ENCODE measurements at regions of chr1 and their contacts with region 1.

Region 1: DNA sequence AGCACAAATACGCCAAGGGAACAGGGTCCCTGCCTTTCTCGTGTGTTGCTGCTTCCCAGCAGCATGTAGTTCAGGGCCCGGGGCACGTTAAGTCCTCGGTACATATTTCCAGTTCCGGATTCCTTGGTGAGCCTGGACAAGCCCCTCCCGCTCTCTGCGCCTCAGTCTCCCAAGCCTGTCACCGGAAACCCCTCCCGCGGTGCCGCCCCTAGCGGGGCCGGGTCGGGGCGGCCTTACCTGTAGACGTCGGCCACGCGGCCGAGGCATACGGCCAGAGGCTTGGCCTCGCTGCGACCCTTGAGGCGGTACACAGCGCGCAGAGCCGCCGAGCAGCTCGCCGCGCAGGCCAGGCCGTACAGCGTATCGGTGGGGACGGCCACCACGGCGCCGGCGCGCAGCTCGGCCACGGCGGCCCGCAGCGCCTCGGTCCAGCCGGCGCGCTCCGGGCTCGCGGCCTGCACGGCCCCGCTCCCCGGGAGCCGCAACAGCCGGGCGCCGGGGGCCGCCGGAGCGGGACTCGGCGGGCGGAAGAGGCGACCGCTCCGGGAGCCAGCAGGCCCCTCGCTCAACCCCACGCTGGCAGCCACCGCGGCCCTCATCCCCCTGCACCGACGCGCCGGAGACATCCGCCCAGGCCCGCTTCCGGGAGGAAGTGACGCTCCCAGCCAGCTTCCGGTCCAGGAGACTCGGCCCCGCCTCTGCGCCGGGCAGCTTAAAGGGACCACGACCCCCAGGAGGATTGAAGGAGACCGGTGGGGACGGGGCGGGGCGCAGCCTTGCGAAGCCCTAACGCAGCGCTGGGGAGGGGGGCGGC is at the starts of genes C1orf122 and YRDC:
- DNase-seq: peak; percentile 95
- H3K4me3 ChIP-seq: peak within 1 kb of the TSS; percentile 91
- H3K27ac ChIP-seq: peak within 1 kb of the TSS; percentile 32
- H3K4me1 ChIP-seq: peaks cover 27% of the 10 kb centered on the region
- CTCF ChIP-seq: no peak
- total RNA-seq, gene C1orf122: 18.9 and 26.0 TPM in 2 replicates
- total RNA-seq, gene YRDC: 27.6 and 33.6 TPM in 2 replicates

Region 2: DNA sequence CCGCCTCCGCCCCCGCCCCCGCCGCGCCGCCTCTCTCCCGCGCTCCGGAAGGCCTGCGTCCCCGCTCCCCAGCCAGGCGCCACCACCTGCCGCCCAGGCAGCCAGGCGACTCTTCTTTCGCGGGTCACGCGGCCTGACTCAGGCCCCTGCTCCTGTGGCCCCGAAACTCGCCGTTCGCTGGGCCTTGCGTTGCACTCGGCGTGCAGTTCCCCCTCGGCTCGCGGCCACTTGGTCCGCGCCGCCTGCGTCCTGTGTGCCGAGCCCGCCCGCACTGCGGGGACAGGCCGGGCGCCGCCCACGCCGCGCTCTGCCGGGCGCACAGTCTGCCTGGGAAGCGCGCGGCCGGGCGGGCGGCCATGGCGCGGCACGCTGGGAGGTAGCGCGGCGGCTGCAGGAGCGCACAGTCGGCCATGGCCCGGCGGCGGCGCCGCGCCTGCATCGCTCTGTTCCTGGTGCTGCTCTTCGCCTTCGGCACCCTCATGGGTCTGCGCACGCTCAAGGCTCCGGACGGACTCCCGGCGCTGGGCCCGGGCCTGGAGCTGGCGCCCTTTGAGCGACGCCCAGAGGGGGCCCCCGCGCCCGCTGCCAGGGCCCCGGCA is 13.9 kb before region 1 on chr1 and contains the start of gene MANEAL:
- CTCF ChIA-PET with region 1: no interaction called
- POLR2A ChIA-PET with region 1: interaction called, 6 read pairs
- intact Hi-C with region 1: loop called (anchors 1 kb)
- DNase-seq: peak; percentile 85
- H3K4me3 ChIP-seq: peak within 1 kb of the TSS; percentile 88
- H3K27ac ChIP-seq: peak within 1 kb of the TSS; percentile 33
- H3K4me1 ChIP-seq: peaks cover 28% of the 10 kb centered on the region
- CTCF ChIP-seq: no peak
- total RNA-seq, gene MANEAL: 11.8 and 27.1 TPM in 2 replicates

Region 3: GRCh38 chr1:37859507-37860345 is 52.0 kb after region 1 on chr1 and contains the start of gene MTF1:
- CTCF ChIA-PET with region 1: interaction called, 22 read pairs
- POLR2A ChIA-PET with region 1: interaction called, 4 read pairs
- intact Hi-C with region 1: loop called (anchors 2 kb)
- DNase-seq: peak; percentile 98
- H3K4me3 ChIP-seq: peak within 1 kb of the TSS; percentile 84
- H3K27ac ChIP-seq: peak within 1 kb of the TSS; percentile 71
- H3K4me1 ChIP-seq: peaks cover 25% of the 10 kb centered on the region
- CTCF ChIP-seq: peak; percentile 90
- total RNA-seq, gene MTF1: 1.6 and 1.8 TPM in 2 replicates

Region 4: DNA sequence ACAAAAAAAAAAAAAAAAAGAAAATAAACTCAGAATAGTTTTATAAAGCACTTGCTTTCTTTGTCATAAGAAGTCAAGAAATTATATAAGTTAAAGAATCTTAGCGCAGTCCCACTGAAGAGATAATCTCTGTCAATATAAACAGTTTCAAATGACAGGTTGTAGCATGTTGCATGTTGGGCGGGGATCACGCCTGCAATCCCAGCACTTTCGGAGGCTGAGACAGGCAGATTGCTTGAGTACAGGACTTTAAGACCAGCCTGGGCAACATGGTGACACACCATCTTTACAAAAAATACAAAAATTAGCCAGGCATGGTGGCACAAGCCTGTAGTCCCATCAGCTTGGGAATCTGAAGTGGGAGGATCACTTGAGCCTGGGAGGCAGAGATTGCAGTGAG is 157.5 kb after region 1 on chr1:
- CTCF ChIA-PET with region 1: no interaction called
- POLR2A ChIA-PET with region 1: no interaction called
- intact Hi-C with region 1: no loop called
- DNase-seq: no peak
- H3K4me3 ChIP-seq: no peak overlapping the region
- H3K27ac ChIP-seq: no peak overlapping the region
- H3K4me1 ChIP-seq: no peaks in the 10 kb centered on the region
- CTCF ChIP-seq: no peak

Region 5: DNA sequence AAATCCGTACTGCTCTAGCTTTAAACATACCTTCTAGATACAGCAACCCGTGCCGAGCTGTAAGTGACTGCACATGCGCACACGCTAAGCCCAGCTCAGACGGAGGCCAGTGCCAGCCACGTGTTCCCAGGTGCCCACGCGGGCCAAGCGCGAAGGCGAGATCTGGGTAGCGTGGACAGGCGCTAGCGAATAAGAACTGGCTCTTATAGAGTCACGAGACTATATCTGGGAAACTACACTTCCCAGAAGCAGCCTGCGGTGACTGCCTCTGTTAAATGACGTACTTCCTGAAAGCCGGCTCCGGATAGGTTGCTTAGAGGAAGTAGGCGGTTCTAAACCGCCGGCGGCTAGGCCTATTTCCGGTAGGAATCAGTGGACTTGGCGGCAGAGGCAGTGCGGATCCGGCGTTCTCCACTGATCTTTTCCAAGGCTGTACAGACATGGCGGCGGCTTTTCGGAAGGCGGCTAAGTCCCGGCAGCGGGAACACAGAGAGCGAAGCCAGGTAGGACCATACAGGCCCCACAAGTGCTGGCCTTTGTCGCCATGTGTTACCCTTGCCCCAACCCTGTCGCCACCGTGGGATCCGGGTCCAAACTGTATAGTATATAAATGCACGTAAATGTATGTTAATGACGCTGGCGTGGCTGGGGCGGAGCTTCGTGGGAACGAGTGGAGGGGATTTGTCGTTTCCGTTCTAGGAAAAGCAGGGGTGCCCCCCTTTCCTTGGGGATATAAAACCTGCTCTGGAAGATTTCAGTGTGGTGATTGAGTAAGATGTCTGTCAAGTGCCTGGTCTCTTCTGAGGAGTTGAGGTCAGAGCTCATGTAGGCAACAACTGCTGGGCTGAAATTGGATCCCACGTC is 204.8 kb after region 1 on chr1 and contains the start of gene UTP11:
- CTCF ChIA-PET with region 1: interaction called, 12 read pairs
- POLR2A ChIA-PET with region 1: no interaction called
- intact Hi-C with region 1: no loop called
- DNase-seq: peak; percentile 98
- H3K4me3 ChIP-seq: peak within 1 kb of the TSS; percentile 81
- H3K27ac ChIP-seq: peak within 1 kb of the TSS; percentile 65
- H3K4me1 ChIP-seq: peaks cover 22% of the 10 kb centered on the region
- CTCF ChIP-seq: no peak
- total RNA-seq, gene UTP11: 43.8 and 61.1 TPM in 2 replicates

Region 6: DNA sequence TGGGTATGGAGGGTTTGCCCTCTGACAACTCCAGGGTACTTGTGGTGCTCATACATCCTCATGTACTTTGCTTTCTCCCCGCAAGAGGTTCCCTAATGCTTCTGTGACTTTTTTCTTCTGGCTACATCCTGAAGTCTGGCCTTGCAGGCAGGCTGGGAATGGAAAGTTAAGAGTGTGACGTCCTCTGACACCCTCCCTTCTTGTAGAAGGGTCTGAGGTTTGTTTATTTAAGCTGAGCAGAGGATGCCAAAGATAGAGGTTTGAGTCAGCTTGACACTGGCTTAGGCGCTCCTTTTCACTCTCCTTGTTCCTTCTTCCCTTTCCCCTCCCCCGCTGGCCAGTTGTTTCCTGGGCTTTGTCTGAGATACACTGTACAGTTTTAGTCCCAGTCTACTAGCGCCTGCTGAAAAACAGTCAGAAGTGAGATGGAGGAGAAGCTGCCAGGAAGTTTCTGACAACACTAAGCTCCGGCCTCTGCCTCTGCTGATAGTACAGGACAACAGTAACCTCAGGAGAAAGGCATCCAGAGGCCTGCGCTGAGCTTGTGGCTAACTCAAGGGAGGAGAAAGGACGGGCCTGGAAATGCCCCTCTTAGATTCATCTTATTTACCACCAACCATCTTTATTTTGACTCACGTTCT is 1396.8 kb after region 1 on chr1 and contains the start of gene MACF1:
- CTCF ChIA-PET with region 1: interaction called, 12 read pairs
- POLR2A ChIA-PET with region 1: no interaction called
- intact Hi-C with region 1: no loop called
- DNase-seq: peak; percentile 61
- H3K4me3 ChIP-seq: peak within 1 kb of the TSS; percentile 70
- H3K27ac ChIP-seq: peak within 1 kb of the TSS; percentile 70
- H3K4me1 ChIP-seq: peaks cover 55% of the 10 kb centered on the region
- CTCF ChIP-seq: peak; percentile 60
- total RNA-seq, gene MACF1: 211 and 235 TPM in 2 replicates